ENCODE measurements at regions of chr10 and their contacts with region 1.

Region 1: GRCh38 chr10:89301721-89302445 is at the start of gene IFIT2:
- DNase-seq: no peak
- ATAC-seq: peak; percentile 69
- H3K4me3 ChIP-seq: peak within 1 kb of the TSS; percentile 47 to 58
- H3K27ac ChIP-seq: no peak within 1 kb of the TSS
- H3K4me1 ChIP-seq: peaks cover 0 to 17% of the 10 kb centered on the region in 2 experiments; a peak in 2 of 4 replicates
- H3K27me3 ChIP-seq: no peaks in the 10 kb centered on the region
- CTCF ChIP-seq: no peak
- POLR2A ChIP-seq: no peak
- RAD21 ChIP-seq: no peak
- total RNA-seq, gene IFIT2: 1.0 TPM

Region 2: GRCh38 chr10:89283936-89284475 is 17.9 kb before region 1 on chr10:
- CTCF ChIA-PET with region 1: no interaction called
- POLR2A ChIA-PET with region 1: no interaction called
- RAD21 ChIA-PET with region 1: no interaction called
- intact Hi-C with region 1: loop called (anchors 2 kb)
- DNase-seq: no peak
- ATAC-seq: peak; percentile 63
- H3K4me3 ChIP-seq: no peak overlapping the region
- H3K27ac ChIP-seq: peak overlapping the region; percentile 15; the same call in 1 of the 2 replicates
- H3K4me1 ChIP-seq: peaks cover 35 to 47% of the 10 kb centered on the region in 2 experiments
- H3K27me3 ChIP-seq: no peaks in the 10 kb centered on the region
- CTCF ChIP-seq: no peak
- POLR2A ChIP-seq: no peak
- RAD21 ChIP-seq: no peak

Measured in HCT116 (cell line).